IMR-90 (cell line): ENCODE measurements at regions of chr2 and their contacts with region 1.

Region 1: DNA sequence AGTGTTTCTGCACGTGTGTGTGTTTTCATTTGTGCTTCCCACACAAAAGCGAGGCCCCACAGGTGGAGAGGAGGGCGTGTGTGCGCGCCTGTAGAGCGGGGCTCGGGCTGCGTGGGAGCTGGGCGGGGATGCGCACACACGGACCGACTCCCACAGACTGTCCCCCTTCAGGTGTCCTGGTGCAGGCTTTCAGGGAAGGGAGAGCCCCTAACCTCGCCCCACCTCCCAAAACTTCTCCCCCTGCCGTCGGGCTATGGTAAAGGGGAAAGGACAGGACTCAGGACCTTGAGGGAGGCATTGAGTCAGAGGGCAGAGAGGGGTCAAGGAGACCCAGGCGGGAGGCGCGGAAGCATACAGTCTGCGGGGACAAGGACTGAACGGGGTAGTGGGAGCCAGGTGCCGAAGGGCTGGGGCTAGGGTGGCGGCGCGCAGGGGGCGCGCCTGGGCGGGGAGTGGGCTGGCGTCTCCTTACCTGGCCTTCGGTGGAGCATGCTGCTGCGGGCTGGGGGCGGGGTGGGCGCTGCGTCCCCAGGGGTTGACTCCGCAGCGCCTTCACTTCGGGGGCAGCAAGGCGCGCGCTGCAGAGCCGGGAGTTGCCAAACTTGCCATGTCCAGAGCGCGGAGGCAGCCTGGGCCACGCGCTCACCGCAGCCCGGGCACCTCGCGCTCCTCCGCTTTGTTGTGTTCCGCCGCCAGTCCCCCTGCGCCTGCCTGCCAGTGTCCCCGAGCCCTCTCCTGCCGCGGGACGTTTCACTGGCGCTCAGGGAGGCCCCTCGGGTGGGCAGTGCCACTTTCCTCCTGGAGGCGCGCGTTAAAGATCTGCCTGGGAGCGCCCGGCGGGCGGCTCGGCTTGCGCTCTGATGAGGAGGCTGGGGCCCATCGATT is 302.0 kb downstream of the NCKAP5 start:
- DNase-seq: no peak
- ATAC-seq: peak; percentile 38
- H3K4me3 ChIP-seq: peak overlapping the region; percentile 63
- H3K27ac ChIP-seq: peak overlapping the region; percentile 96
- H3K4me1 ChIP-seq: peaks cover 25% of the 10 kb centered on the region
- H3K27me3 ChIP-seq: no peaks in the 10 kb centered on the region
- CTCF ChIP-seq: 0 out of 2 replicates have a peak, but pooled peaks have one; percentile 13
- POLR2A ChIP-seq: no peak
- RAD21 ChIP-seq: no peak

Region 2: DNA sequence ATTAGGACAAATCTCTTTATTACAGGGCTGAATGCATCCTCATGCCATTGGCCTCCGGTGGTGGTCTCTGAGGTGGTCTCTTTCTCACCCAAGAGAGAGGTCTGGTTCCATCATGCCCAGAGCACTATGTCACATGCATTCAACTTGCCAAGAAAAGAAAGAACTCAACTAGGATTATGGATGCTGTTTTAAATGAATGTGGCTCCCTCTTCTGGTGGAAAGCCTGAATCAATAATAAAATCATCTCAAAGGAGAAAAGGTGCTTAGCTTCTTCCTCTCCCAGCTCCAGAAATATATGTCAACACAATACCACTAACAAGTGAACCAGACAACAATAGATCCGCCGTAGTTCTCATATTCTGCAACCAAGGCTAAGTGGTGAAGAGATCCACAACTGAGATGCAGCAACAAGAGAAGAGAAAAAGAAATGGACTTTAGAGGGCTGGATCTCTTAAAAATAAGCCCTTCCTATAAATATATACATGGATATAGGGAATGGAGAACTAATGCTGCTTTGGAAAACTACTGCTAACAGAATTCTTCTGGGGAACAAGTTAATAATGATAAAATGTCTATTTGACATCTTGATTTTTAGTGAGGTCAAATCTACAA is 94.8 kb before region 1 on chr2:
- CTCF ChIA-PET with region 1: no interaction called
- POLR2A ChIA-PET with region 1: no interaction called
- dilution Hi-C with region 1: no loop called
- in situ Hi-C with region 1: no loop called
- intact Hi-C with region 1: loop called (anchors 5 kb)
- DNase-seq: peak; percentile 74
- ATAC-seq: peak; percentile 64
- H3K4me3 ChIP-seq: no peak overlapping the region
- H3K27ac ChIP-seq: no peak overlapping the region
- H3K4me1 ChIP-seq: peaks cover 11% of the 10 kb centered on the region
- H3K27me3 ChIP-seq: no peaks in the 10 kb centered on the region
- CTCF ChIP-seq: peak; percentile 80
- POLR2A ChIP-seq: no peak
- RAD21 ChIP-seq: peak; percentile 87

Region 3: GRCh38 chr2:133553251-133553650 is 287.0 kb after region 1 on chr2:
- CTCF ChIA-PET with region 1: no interaction called
- POLR2A ChIA-PET with region 1: no interaction called
- dilution Hi-C with region 1: no loop called
- in situ Hi-C with region 1: no loop called
- intact Hi-C with region 1: loop called (anchors 2 kb)
- DNase-seq: no peak
- ATAC-seq: no peak
- H3K4me3 ChIP-seq: no peak overlapping the region
- H3K27ac ChIP-seq: peak overlapping the region; percentile 41; the same call in 1 of the 2 replicates
- H3K4me1 ChIP-seq: peaks cover 9% of the 10 kb centered on the region
- H3K27me3 ChIP-seq: no peaks in the 10 kb centered on the region
- CTCF ChIP-seq: no peak
- POLR2A ChIP-seq: no peak
- RAD21 ChIP-seq: no peak

Region 4: DNA sequence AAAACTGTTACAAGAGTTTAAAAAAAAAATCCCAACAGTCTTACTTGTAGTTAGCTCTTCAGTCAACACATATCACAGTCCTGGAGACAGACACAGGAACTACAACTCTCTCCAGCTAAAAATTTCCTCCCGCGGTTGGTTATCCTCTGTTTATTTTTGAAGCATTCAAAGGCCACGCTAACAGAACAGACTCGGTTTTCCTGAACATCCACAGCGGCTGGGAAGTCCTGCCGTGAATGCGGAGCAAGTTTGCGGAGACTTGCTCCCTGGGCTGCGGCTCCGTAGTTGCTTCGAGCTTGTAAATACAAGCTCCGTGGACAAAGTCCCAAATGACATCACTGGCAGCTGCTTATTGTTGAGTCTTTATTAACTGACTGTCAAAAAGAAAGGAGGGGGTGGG is 301.9 kb after region 1 on chr2 and contains the start of gene NCKAP5:
- CTCF ChIA-PET with region 1: interaction called, 3 read pairs
- POLR2A ChIA-PET with region 1: interaction called, 10 read pairs
- dilution Hi-C with region 1: no loop called
- in situ Hi-C with region 1: no loop called
- intact Hi-C with region 1: no loop called
- DNase-seq: peak; percentile 82
- ATAC-seq: peak; percentile 67
- H3K4me3 ChIP-seq: peak within 1 kb of the TSS; percentile 50
- H3K27ac ChIP-seq: peak within 1 kb of the TSS; percentile 84
- H3K4me1 ChIP-seq: peaks cover 15% of the 10 kb centered on the region
- H3K27me3 ChIP-seq: no peaks in the 10 kb centered on the region
- CTCF ChIP-seq: peak; percentile 24; the same call in 1 of the 2 replicates
- POLR2A ChIP-seq: no peak
- RAD21 ChIP-seq: peak; percentile 23
- total RNA-seq, gene NCKAP5: 3.9 and 5.3 TPM in 2 replicates

Region 5: GRCh38 chr2:133674433-133675331 is 408.4 kb after region 1 on chr2:
- CTCF ChIA-PET with region 1: no interaction called
- POLR2A ChIA-PET with region 1: interaction called, 4 read pairs
- dilution Hi-C with region 1: no loop called
- in situ Hi-C with region 1: no loop called
- intact Hi-C with region 1: loop called (anchors 10 kb)
- DNase-seq: peak; percentile 90
- ATAC-seq: peak; percentile 82
- H3K4me3 ChIP-seq: peak overlapping the region; percentile 41
- H3K27ac ChIP-seq: peak overlapping the region; percentile 96
- H3K4me1 ChIP-seq: peaks cover 20% of the 10 kb centered on the region
- H3K27me3 ChIP-seq: no peaks in the 10 kb centered on the region
- CTCF ChIP-seq: no peak
- POLR2A ChIP-seq: no peak
- RAD21 ChIP-seq: no peak

Region 6: GRCh38 chr2:133780099-133780839 is 514.0 kb after region 1 on chr2:
- CTCF ChIA-PET with region 1: interaction called, 3 read pairs
- POLR2A ChIA-PET with region 1: no interaction called
- dilution Hi-C with region 1: no loop called
- in situ Hi-C with region 1: no loop called
- intact Hi-C with region 1: loop called (anchors 2 kb)
- DNase-seq: peak; percentile 86
- ATAC-seq: peak; percentile 94
- H3K4me3 ChIP-seq: no peak overlapping the region
- H3K27ac ChIP-seq: no peak overlapping the region
- H3K4me1 ChIP-seq: 0 out of 2 replicates have a peak, but pooled peaks cover 2% of the 10 kb centered on the region
- H3K27me3 ChIP-seq: no peaks in the 10 kb centered on the region
- CTCF ChIP-seq: peak; percentile 84
- POLR2A ChIP-seq: no peak
- RAD21 ChIP-seq: peak; percentile 86

Region 7: DNA sequence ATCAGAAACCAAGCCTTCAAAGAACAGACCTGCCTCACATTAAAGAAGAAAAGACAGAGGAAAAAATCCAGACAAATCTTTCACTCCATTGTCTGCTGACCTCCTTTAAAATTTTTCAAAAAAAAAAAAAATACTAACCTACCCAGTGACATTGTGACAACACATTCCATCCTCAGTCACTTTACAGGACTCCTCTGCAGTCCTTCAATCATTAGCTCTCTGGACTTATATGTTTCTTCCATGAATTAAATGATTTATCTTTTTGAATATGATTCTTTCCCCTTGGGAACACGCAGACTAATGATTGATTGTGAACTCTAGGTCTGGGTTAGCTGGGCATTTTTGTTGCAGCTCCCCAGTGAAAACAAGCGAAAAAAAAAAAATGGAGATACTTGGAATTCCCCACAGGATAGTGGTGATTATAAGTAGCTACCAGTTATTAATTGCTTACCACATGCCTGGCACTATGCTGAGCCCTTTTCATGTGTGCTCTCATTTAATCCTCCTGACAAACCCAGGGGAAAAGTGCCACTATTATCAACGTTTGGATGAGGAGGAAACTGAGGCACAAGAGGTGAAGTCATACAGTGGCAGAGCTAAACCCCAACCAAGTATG is 563.3 kb after region 1 on chr2:
- CTCF ChIA-PET with region 1: no interaction called
- POLR2A ChIA-PET with region 1: no interaction called
- dilution Hi-C with region 1: no loop called
- in situ Hi-C with region 1: no loop called
- intact Hi-C with region 1: no loop called
- DNase-seq: no peak
- ATAC-seq: no peak; the same call in 1 of the 2 replicates
- H3K4me3 ChIP-seq: no peak overlapping the region
- H3K27ac ChIP-seq: 0 out of 2 replicates have a peak overlapping the region, but pooled peaks have one; percentile 26
- H3K4me1 ChIP-seq: peaks cover 7% of the 10 kb centered on the region
- H3K27me3 ChIP-seq: no peaks in the 10 kb centered on the region
- CTCF ChIP-seq: no peak
- POLR2A ChIP-seq: no peak
- RAD21 ChIP-seq: no peak

Region 8: DNA sequence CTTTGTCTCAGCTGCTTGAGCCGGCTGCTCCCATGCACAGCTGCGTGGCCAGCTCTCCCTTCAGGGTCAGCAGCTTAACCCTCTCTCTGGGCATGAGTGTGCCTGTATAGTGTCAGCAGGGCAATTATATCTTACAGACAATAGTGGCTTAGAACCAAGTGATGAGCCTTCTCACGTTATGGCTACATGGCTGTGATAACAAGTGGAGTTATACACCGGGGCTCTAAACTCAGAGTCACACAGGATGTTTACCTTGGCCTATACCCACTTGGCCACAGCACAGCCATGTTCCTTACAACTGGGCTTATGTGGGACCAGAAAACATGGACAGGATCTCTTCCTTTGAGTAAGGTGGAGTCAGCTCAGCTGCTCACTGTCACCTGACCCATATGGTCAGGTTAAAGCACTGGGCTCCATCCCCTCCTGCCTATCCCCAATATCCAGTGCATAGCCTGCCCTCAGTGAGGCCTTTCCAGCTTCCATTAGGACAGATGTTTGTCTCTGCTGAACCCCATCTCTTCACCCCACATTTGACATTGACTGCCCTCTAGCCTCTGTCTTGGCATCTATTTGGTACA is 596.2 kb after region 1 on chr2:
- CTCF ChIA-PET with region 1: no interaction called
- POLR2A ChIA-PET with region 1: interaction called, 12 read pairs
- dilution Hi-C with region 1: no loop called
- in situ Hi-C with region 1: no loop called
- intact Hi-C with region 1: no loop called
- DNase-seq: peak; percentile 67
- ATAC-seq: peak; percentile 21
- H3K4me3 ChIP-seq: no peak overlapping the region
- H3K27ac ChIP-seq: no peak overlapping the region
- H3K4me1 ChIP-seq: no peaks in the 10 kb centered on the region
- H3K27me3 ChIP-seq: peaks cover 11% of the 10 kb centered on the region
- CTCF ChIP-seq: no peak
- POLR2A ChIP-seq: no peak
- RAD21 ChIP-seq: no peak

Region 9: DNA sequence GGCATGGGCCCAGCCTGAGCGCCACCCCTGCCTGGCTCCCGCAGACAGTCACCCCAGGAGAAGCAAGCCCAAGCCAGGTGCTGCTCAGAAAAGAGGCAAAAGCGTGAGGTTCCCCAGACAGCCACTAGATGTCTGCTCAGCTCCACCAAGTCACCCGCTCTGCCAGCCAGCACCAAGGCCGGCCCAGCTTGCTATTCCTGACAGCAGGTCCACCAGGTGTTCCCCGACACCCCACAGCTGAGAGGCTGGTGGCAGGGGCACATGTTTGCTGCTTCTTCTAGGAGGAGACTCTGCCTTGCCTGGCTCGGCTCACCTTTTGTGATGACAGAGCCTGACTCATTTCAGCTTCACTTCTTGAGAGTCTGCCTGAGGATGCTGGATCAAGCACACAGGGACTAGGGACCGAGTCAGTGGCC is 1194.3 kb after region 1 on chr2:
- CTCF ChIA-PET with region 1: no interaction called
- POLR2A ChIA-PET with region 1: no interaction called
- dilution Hi-C with region 1: no loop called
- in situ Hi-C with region 1: no loop called
- intact Hi-C with region 1: no loop called
- DNase-seq: peak; percentile 47
- ATAC-seq: peak; percentile 74
- H3K4me3 ChIP-seq: no peak overlapping the region
- H3K27ac ChIP-seq: no peak overlapping the region
- H3K4me1 ChIP-seq: no peaks in the 10 kb centered on the region
- H3K27me3 ChIP-seq: peaks cover 15% of the 10 kb centered on the region
- CTCF ChIP-seq: peak; percentile 58
- POLR2A ChIP-seq: no peak
- RAD21 ChIP-seq: peak; percentile 66

Region 10: GRCh38 chr2:134949981-134950708 is 1683.9 kb after region 1 on chr2:
- CTCF ChIA-PET with region 1: no interaction called
- POLR2A ChIA-PET with region 1: no interaction called
- dilution Hi-C with region 1: no loop called
- in situ Hi-C with region 1: no loop called
- intact Hi-C with region 1: no loop called
- DNase-seq: no peak
- ATAC-seq: no peak
- H3K4me3 ChIP-seq: no peak overlapping the region
- H3K27ac ChIP-seq: no peak overlapping the region
- H3K4me1 ChIP-seq: 0 out of 2 replicates have a peak, but pooled peaks cover 2% of the 10 kb centered on the region
- H3K27me3 ChIP-seq: no peaks in the 10 kb centered on the region
- CTCF ChIP-seq: no peak
- POLR2A ChIP-seq: no peak
- RAD21 ChIP-seq: no peak